Activated CD4-positive, alpha-beta T cell treated with anti-CD3 and anti-CD28 coated beads for 36 hours (primary cell): ENCODE measurements at regions of chr11 and their contacts with region 1.

Region 1: DNA sequence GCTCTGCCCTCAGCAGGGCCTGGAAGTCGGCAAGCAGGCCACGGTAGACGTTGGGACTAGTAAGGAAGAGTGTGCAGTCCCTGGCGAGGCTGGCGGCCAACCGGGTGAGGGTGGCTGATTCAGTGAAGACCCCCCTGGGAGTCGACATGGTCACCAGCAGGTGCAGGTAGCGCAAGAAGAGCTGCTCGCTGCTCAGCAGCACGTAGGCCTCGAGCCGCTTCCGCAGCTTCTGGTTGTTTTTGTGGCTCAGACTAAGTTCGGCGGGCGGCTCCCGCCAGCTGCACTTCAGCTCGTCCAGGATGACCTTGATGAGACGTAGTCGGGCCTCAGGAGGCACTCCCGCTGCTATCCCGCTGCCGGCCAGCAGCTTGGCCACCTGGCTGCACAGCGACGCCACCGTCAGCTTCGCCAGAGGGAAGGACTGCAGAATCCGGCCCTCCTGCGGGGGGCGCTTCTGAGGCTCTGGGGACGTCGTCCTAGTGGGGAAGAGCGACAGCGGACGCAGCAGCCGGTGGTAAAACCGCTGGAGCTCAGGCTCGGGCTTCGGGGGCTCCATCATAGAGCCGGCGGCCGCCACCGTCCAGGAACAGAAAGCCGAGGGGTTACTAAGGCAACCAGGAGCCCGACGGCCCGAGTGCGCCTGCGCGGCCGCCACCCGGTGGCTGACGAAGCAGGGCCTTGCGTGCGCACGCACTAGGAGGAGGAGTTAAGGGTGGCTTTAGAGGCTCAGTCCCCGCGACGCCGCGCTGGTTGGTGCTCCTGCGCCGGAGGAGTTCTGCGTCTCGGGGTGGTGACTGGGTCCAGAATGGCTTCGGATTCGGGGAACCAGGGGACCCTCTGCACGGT is at the starts of genes CCDC87 and CCS:
- DNase-seq: peak; percentile 99
- ATAC-seq: peak; percentile 100
- H3K4me3 Mint-ChIP-seq: peak within 1 kb of the TSS; percentile 93
- H3K27ac Mint-ChIP-seq: peak within 1 kb of the TSS; percentile 98
- H3K4me1 Mint-ChIP-seq: peaks cover 19% of the 10 kb centered on the region
- H3K27me3 Mint-ChIP-seq: no peaks in the 10 kb centered on the region
- total RNA-seq, gene CCDC87: 0.09 to 0.14 TPM
- total RNA-seq, gene CCS: 16.3 to 24.0 TPM

Region 2: GRCh38 chr11:66510271-66510989 is 82.2 kb before region 1 on chr11 and contains the start of gene BBS1:
- CTCF ChIA-PET with region 1: no interaction called
- POLR2A ChIA-PET with region 1: no interaction called
- intact Hi-C with region 1: loop called in 1 of 2 experiments (anchors 1 kb)
- DNase-seq: peak; percentile 88
- ATAC-seq: peak; percentile 98
- H3K4me3 Mint-ChIP-seq: peak within 1 kb of the TSS; percentile 86
- H3K27ac Mint-ChIP-seq: peak within 1 kb of the TSS; percentile 48
- H3K4me1 Mint-ChIP-seq: peaks cover 10% of the 10 kb centered on the region
- H3K27me3 Mint-ChIP-seq: no peaks in the 10 kb centered on the region
- total RNA-seq, gene BBS1: 9.4 to 10.7 TPM

Region 3: DNA sequence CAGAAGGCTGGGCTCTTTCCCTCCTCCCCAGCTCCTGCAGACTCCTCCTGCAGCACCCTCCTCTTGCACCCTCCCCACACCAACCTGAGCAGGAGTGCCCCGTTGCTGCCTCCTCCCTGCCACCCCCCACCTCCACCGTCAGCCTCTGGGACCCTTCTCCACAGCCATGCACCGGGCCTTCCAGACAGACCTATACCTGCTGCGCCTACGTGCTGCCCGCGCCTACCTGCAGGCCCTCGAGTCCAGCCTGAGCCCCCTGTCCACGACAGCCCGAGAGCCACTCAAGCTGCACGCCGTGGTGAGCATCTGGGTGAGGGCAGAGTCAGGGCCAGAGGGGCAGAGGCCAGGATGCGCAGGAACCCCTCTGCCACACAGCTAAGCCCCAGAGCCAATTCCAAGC is 63.0 kb before region 1 on chr11:
- CTCF ChIA-PET with region 1: no interaction called
- POLR2A ChIA-PET with region 1: no interaction called
- intact Hi-C with region 1: no loop called
- DNase-seq: no peak
- ATAC-seq: no peak
- H3K4me3 Mint-ChIP-seq: no peak overlapping the region
- H3K27ac Mint-ChIP-seq: no peak overlapping the region
- H3K4me1 Mint-ChIP-seq: no peaks in the 10 kb centered on the region
- H3K27me3 Mint-ChIP-seq: no peaks in the 10 kb centered on the region

Region 4: GRCh38 chr11:66545701-66546367 is 46.8 kb before region 1 on chr11 and contains the start of gene ZDHHC24:
- CTCF ChIA-PET with region 1: interaction called, 3 read pairs
- POLR2A ChIA-PET with region 1: no interaction called
- intact Hi-C with region 1: loop called in 1 of 2 experiments (anchors 1 kb)
- DNase-seq: peak; percentile 95
- ATAC-seq: peak; percentile 94
- H3K4me3 Mint-ChIP-seq: peak within 1 kb of the TSS; percentile 76
- H3K27ac Mint-ChIP-seq: peak within 1 kb of the TSS; percentile 67
- H3K4me1 Mint-ChIP-seq: peaks cover 20% of the 10 kb centered on the region
- H3K27me3 Mint-ChIP-seq: peaks cover 5% of the 10 kb centered on the region
- total RNA-seq, gene ZDHHC24: 9.7 to 11.3 TPM